HCT116 (cell line): ENCODE measurements at regions of chr2 and their contacts with region 1.

Region 1: DNA sequence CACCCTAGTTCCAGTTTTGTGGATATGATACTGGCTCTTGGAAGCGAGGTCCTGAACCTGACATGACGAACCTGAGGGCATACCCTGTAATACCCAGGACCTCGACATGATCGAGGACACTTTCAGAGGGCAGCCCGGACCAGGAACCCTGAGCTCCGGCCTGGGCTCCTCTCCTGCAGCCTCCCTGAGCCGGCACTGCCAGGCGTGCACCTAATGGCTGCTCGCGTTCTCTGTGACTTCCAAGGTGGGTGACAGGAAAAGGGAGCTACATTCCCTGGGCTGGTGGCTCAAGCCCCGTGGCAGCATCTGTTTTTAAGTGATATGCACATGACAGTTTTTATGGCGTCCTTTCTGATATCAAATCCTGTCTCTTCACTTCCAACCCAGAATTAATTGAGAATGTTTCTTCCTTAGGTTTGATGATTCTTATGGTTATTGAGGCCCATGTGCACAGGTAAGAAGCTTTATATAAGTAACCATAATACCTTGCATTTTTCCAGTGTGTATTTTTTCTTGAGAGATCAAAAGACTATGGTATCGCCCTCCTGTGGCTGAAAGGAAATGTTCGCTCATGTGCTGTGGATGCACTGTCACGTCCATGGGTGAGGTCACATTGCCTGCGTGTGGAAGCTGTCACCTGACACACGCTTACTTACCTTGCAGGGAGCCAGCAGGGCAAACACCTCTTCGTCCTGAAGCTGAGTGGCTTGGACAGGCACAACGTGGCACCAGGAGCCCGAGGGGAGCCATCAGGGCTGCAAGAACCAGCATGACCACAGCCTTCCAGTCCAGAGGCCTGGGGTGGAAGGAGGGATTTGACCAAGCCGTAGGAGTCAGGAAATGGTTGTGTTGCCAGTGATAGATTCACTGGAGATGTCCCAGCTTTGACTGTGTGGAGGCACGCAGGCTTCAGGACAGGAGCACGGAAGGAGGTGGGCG is 367.4 kb upstream of the MYT1L start:
- DNase-seq: peak; percentile 22
- ATAC-seq: peak; percentile 75
- H3K4me3 ChIP-seq: no peak overlapping the region
- H3K27ac ChIP-seq: no peak overlapping the region
- H3K4me1 ChIP-seq: no peaks in the 10 kb centered on the region
- H3K27me3 ChIP-seq: peaks cover 45% of the 10 kb centered on the region
- CTCF ChIP-seq: peak; percentile 21 to 59 (median 44); a peak in 4 of 6 replicates
- POLR2A ChIP-seq: no peak
- RAD21 ChIP-seq: peak; percentile 43; the same call in 1 of the 2 replicates

Region 2: GRCh38 chr2:1891147-1891546 is 807.3 kb before region 1 on chr2:
- CTCF ChIA-PET with region 1: no interaction called
- POLR2A ChIA-PET with region 1: no interaction called
- RAD21 ChIA-PET with region 1: no interaction called
- intact Hi-C with region 1: loop called (anchors 10 kb)
- DNase-seq: no peak
- ATAC-seq: peak; percentile 46; the same call in 1 of the 2 replicates
- H3K4me3 ChIP-seq: no peak overlapping the region
- H3K27ac ChIP-seq: no peak overlapping the region
- H3K4me1 ChIP-seq: no peaks in the 10 kb centered on the region
- H3K27me3 ChIP-seq: peaks cover 11% of the 10 kb centered on the region
- CTCF ChIP-seq: no peak
- POLR2A ChIP-seq: no peak
- RAD21 ChIP-seq: no peak

Region 3: GRCh38 chr2:2243666-2244065 is 454.8 kb before region 1 on chr2:
- CTCF ChIA-PET with region 1: no interaction called
- POLR2A ChIA-PET with region 1: no interaction called
- RAD21 ChIA-PET with region 1: no interaction called
- intact Hi-C with region 1: no loop called
- DNase-seq: no peak
- ATAC-seq: no peak
- H3K4me3 ChIP-seq: no peak overlapping the region
- H3K27ac ChIP-seq: no peak overlapping the region
- H3K4me1 ChIP-seq: no peaks in the 10 kb centered on the region
- H3K27me3 ChIP-seq: no peaks in the 10 kb centered on the region
- CTCF ChIP-seq: no peak
- POLR2A ChIP-seq: no peak
- RAD21 ChIP-seq: no peak

Region 4: DNA sequence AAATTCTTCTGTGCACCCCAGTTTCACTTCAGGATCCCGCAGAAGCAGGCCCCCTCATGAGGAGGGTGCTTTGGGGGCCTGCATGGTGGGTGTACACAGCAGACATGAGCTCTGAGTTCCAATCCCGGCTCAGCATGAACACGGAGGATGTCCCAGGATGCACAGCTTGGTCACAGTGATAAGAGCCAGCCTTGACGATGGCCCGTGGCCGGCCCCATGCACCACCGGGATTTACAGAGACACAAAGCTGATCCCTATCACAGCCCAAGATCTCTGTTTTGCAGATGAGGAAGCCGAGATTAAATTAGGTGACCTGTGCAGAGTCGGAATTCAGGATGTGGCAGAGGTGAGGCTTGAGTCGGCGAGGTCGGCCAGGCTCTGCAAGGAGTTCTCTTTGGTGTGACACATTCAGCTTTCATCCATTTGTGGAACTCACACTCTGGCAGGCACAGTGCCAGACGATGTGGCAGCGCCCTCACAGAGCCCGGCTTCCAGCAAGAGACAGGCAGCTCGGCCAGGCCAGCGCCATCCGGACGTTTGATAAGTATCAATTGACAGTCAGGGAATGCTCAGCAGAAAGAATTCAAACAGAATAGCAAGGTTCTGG is 89.0 kb after region 1 on chr2:
- CTCF ChIA-PET with region 1: no interaction called
- POLR2A ChIA-PET with region 1: no interaction called
- RAD21 ChIA-PET with region 1: no interaction called
- intact Hi-C with region 1: no loop called
- DNase-seq: no peak
- ATAC-seq: no peak
- H3K4me3 ChIP-seq: no peak overlapping the region
- H3K27ac ChIP-seq: no peak overlapping the region
- H3K4me1 ChIP-seq: no peaks in the 10 kb centered on the region
- H3K27me3 ChIP-seq: peaks cover 12% of the 10 kb centered on the region; the same call in 1 of the 2 replicates
- CTCF ChIP-seq: no peak
- POLR2A ChIP-seq: no peak
- RAD21 ChIP-seq: no peak

Region 5: GRCh38 chr2:3154700-3155099 is 456.2 kb after region 1 on chr2:
- CTCF ChIA-PET with region 1: no interaction called
- POLR2A ChIA-PET with region 1: no interaction called
- RAD21 ChIA-PET with region 1: no interaction called
- intact Hi-C with region 1: no loop called
- DNase-seq: no peak
- ATAC-seq: no peak
- H3K4me3 ChIP-seq: no peak overlapping the region
- H3K27ac ChIP-seq: no peak overlapping the region
- H3K4me1 ChIP-seq: peaks cover 0 to 4% of the 10 kb centered on the region in 2 experiments; a peak in 1 of 4 replicates
- H3K27me3 ChIP-seq: no peaks in the 10 kb centered on the region
- CTCF ChIP-seq: no peak
- POLR2A ChIP-seq: no peak
- RAD21 ChIP-seq: no peak